K562 (cell line): ENCODE measurements at regions of chr9 and their contacts with region 1.

Region 1: GRCh38 chr9:137114610-137115391 is at the start of gene DPP7:
- DNase-seq: peak; percentile 85 to 95 (median 93)
- ATAC-seq: peak; percentile 88
- H3K4me3 ChIP-seq: peak within 1 kb of the TSS; percentile 72
- H3K27ac ChIP-seq: peak within 1 kb of the TSS; percentile 76
- H3K4me1 ChIP-seq: peaks cover 18 to 71% of the 10 kb centered on the region in 2 experiments
- H3K27me3 ChIP-seq: no peaks in the 10 kb centered on the region
- CTCF ChIP-seq: no peak
- EP300 ChIP-seq: no peak
- POLR2A ChIP-seq: peak; percentile 54
- RAD21 ChIP-seq: no peak
- polyA plus RNA-seq, gene DPP7: 0.99 to 4.1 TPM

Region 2: DNA sequence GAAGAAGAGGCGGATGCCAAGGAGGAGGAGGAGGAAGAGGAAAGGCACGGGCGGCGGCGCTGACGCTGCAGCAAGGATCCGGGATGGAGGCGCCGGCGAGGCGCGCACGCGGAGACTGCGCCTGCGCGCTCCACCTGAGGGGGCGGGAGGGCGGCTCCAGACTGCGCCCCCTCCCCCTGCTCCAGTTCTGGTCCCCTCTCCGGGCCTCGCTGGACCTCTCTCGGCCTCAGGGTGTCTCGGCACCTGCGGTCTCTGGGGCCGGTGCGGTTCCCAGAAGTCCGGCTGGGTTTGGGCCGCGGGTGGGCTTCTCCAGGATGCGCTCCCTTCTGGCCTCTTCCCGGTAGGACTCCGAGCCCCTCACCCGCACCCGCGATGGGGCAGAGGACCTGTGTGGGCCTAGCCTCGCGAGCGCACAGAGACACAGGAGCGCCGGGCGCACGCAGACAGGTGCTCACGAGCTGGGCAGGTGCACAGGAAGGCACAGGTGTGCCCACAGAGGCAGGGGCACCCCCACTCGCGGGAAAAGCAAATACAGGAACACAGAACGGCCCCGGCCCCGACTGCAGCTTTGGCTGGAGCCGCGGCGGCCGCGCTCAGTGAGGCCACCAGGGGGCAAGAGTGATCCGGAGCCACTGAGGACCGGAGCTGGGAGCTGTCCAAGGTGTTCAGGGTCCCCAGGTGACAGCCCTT is 68.6 kb before region 1 on chr9 and contains the start of gene NPDC1:
- CTCF ChIA-PET with region 1: interaction called, 6 read pairs
- POLR2A ChIA-PET with region 1: no interaction called
- in situ Hi-C with region 1: no loop called
- intact Hi-C with region 1: loop called (anchors 5 kb)
- DNase-seq: peak; percentile 83 to 91 (median 86)
- ATAC-seq: peak; percentile 82
- H3K4me3 ChIP-seq: no peak within 1 kb of the TSS
- H3K27ac ChIP-seq: no peak within 1 kb of the TSS
- H3K4me1 ChIP-seq: peaks cover 2 to 79% of the 10 kb centered on the region in 2 experiments; a peak in 4 of 5 replicates
- H3K27me3 ChIP-seq: peaks cover 7 to 39% of the 10 kb centered on the region in 2 experiments; a peak in 4 of 5 replicates
- CTCF ChIP-seq: peak; percentile 87 to 94 (median 87)
- EP300 ChIP-seq: no peak
- POLR2A ChIP-seq: no peak
- RAD21 ChIP-seq: peak; percentile 50 to 81; a peak in 3 of 4 replicates
- polyA plus RNA-seq, gene NPDC1: not detected

Region 3: GRCh38 chr9:137564817-137565411 is 450.1 kb after region 1 on chr9:
- CTCF ChIA-PET with region 1: no interaction called
- POLR2A ChIA-PET with region 1: no interaction called
- in situ Hi-C with region 1: no loop called
- intact Hi-C with region 1: no loop called
- DNase-seq: no peak
- ATAC-seq: no peak
- H3K4me3 ChIP-seq: no peak overlapping the region
- H3K27ac ChIP-seq: no peak overlapping the region
- H3K4me1 ChIP-seq: no peaks in the 10 kb centered on the region
- H3K27me3 ChIP-seq: no peaks in the 10 kb centered on the region
- CTCF ChIP-seq: no peak
- EP300 ChIP-seq: no peak
- POLR2A ChIP-seq: no peak
- RAD21 ChIP-seq: no peak